Transverse colon (tissue), 4 donors: ENCODE measurements at regions of chr7 and their contacts with region 1.

Region 1: DNA sequence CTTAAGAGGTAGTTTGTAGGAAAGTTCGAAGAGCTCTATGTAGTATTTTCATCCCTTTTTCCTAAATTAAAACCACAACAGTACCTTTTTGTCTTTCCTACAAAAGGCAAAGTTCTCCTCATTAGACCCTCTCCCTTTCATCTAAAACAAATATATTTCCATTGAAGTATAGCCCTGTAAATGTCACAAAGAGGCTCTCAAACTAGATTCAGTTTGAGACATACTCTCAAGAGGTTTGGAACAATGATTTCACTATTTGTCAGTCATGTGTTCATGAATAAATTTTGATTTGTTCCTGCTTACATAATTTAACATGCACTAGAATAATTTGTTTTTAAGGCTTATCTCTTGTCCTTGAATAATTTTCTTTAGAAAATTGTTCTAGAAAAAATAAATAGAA is 12.2 kb downstream of the TAS2R16 start:
- DNase-seq: no peak
- H3K4me3 ChIP-seq: no peak overlapping the region
- H3K27ac ChIP-seq: no peak overlapping the region
- H3K4me1 ChIP-seq: no peaks in the 10 kb centered on the region
- H3K27me3 ChIP-seq: no peaks in the 10 kb centered on the region
- CTCF ChIP-seq: no peak
- EP300 ChIP-seq: no peak
- POLR2A ChIP-seq: no peak

Region 2: DNA sequence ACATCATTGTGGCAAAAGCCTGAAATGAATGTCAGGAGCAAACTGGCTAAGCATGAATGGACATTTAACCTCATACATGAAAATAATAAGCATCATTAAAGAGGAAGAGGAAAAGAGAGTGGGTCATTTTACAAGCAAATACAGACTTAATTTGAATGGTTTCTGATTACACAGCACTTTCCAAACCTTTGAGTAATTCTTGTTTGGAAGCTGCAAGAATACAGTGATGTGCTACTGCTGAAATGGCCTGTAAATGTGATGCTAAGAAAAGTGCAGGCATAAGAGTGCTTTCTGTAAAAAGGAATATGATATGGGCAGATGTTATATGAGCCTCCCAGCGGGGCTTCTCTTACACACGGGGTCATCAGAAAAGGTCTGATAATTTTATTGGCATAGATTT is 18.0 kb before region 1 on chr7:
- in situ Hi-C with region 1: no loop called
- intact Hi-C with region 1: loop called (anchors 1 kb)
- DNase-seq: no peak
- H3K4me3 ChIP-seq: no peak overlapping the region
- H3K27ac ChIP-seq: no peak overlapping the region
- H3K4me1 ChIP-seq: no peaks in the 10 kb centered on the region
- H3K27me3 ChIP-seq: no peaks in the 10 kb centered on the region
- CTCF ChIP-seq: no peak
- EP300 ChIP-seq: no peak
- POLR2A ChIP-seq: no peak

Region 3: DNA sequence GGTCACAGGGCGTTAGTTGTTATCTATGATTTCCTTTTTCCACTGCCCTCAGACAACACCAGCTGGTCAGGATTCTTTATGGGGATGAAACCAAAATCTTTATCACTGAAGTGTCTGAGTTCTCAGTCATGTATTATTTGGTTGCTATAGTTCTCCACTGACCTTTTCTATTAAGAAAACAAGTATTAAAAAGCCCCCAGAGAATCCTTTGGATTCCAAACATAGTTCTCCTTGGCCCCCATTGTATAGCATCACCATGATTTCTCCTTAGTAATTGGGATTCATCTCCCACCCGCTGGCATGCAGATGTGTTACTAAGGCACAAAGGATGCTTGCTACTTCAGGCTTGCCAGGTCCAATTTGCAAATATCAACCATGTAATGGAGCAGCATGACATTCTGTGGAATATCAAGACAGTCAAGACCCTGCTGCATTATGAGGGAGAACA is 456.9 kb after region 1 on chr7:
- in situ Hi-C with region 1: no loop called
- intact Hi-C with region 1: no loop called
- DNase-seq: no peak
- H3K4me3 ChIP-seq: no peak overlapping the region
- H3K27ac ChIP-seq: no peak overlapping the region
- H3K4me1 ChIP-seq: no peaks in the 10 kb centered on the region
- H3K27me3 ChIP-seq: no peaks in the 10 kb centered on the region
- CTCF ChIP-seq: no peak
- EP300 ChIP-seq: no peak
- POLR2A ChIP-seq: no peak